T-cell (primary cell): ENCODE measurements at regions of chr12 and their contacts with region 1.

Region 1: GRCh38 chr12:92130999-92131398 is 14.6 kb downstream of the BTG1 start:
- DNase-seq: no peak
- ATAC-seq: peak in 2 of 4 experiments; percentile 17 to 21
- H3K4me3 ChIP-seq: peak overlapping the region; percentile 25 to 26
- H3K4me3 Mint-ChIP-seq: peak overlapping the region; percentile 100
- H3K27ac ChIP-seq: peak overlapping the region; percentile 91
- H3K27ac Mint-ChIP-seq: peak overlapping the region; percentile 88 to 99
- H3K4me1 ChIP-seq: peaks cover 51 to 53% of the 10 kb centered on the region in 2 experiments
- H3K4me1 Mint-ChIP-seq: peaks cover 90 to 92% (median 91%) of the 10 kb centered on the region in 3 donors
- H3K27me3 ChIP-seq: no peaks in the 10 kb centered on the region
- H3K27me3 Mint-ChIP-seq: no peaks in the 10 kb centered on the region

Region 2: GRCh38 chr12:91722072-91722471 is 408.9 kb before region 1 on chr12:
- CTCF ChIA-PET with region 1: no interaction called
- POLR2A ChIA-PET with region 1: interaction called in 1 of 2 experiments, 19 read pairs
- DNase-seq: no peak
- ATAC-seq: no peak
- H3K4me3 ChIP-seq: no peak overlapping the region
- H3K4me3 Mint-ChIP-seq: no peak overlapping the region
- H3K27ac ChIP-seq: no peak overlapping the region
- H3K27ac Mint-ChIP-seq: no peak overlapping the region
- H3K4me1 ChIP-seq: no peaks in the 10 kb centered on the region
- H3K4me1 Mint-ChIP-seq: peaks cover 0 to 5% (median 0%) of the 10 kb centered on the region in 3 donors
- H3K27me3 ChIP-seq: no peaks in the 10 kb centered on the region
- H3K27me3 Mint-ChIP-seq: no peaks in the 10 kb centered on the region

Region 3: GRCh38 chr12:92094751-92095161 is 36.2 kb before region 1 on chr12:
- CTCF ChIA-PET with region 1: no interaction called
- POLR2A ChIA-PET with region 1: no interaction called
- DNase-seq: no peak
- ATAC-seq: no peak
- H3K4me3 ChIP-seq: no peak overlapping the region
- H3K4me3 Mint-ChIP-seq: no peak overlapping the region
- H3K27ac ChIP-seq: no peak overlapping the region
- H3K27ac Mint-ChIP-seq: no peak overlapping the region
- H3K4me1 ChIP-seq: peaks cover 0 to 16% of the 10 kb centered on the region in 2 experiments
- H3K4me1 Mint-ChIP-seq: peaks cover 51 to 56% (median 56%) of the 10 kb centered on the region in 3 donors
- H3K27me3 ChIP-seq: no peaks in the 10 kb centered on the region
- H3K27me3 Mint-ChIP-seq: no peaks in the 10 kb centered on the region

Region 4: DNA sequence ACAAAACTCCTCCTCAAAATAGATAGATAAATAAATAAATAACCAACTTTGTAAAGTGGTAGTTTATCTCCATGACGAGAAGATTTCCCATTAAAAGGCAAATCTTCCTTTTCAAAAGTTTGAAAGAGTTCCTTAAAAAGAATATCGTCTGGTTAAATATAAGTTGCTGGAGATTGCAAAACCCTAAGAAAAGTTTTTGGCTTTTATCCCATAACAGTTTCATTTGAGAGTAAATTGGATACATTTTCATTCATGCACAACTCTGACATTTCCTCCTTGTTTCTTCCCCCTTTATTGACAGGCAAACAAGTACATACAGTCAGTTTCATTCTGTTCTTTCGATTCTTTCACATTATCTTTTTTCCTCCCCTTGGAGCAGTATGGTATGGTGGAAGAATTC is 60.1 kb after region 1 on chr12:
- CTCF ChIA-PET with region 1: no interaction called
- POLR2A ChIA-PET with region 1: no interaction called
- DNase-seq: no peak
- ATAC-seq: no peak
- H3K4me3 ChIP-seq: no peak overlapping the region
- H3K4me3 Mint-ChIP-seq: no peak overlapping the region
- H3K27ac ChIP-seq: no peak overlapping the region
- H3K27ac Mint-ChIP-seq: no peak overlapping the region
- H3K4me1 ChIP-seq: peaks cover 3 to 4% of the 10 kb centered on the region in 2 experiments
- H3K4me1 Mint-ChIP-seq: peaks cover 21 to 26% (median 22%) of the 10 kb centered on the region in 3 donors
- H3K27me3 ChIP-seq: no peaks in the 10 kb centered on the region
- H3K27me3 Mint-ChIP-seq: no peaks in the 10 kb centered on the region